ENCODE measurements at regions of chr4 and their contacts with region 1.

Region 1: DNA sequence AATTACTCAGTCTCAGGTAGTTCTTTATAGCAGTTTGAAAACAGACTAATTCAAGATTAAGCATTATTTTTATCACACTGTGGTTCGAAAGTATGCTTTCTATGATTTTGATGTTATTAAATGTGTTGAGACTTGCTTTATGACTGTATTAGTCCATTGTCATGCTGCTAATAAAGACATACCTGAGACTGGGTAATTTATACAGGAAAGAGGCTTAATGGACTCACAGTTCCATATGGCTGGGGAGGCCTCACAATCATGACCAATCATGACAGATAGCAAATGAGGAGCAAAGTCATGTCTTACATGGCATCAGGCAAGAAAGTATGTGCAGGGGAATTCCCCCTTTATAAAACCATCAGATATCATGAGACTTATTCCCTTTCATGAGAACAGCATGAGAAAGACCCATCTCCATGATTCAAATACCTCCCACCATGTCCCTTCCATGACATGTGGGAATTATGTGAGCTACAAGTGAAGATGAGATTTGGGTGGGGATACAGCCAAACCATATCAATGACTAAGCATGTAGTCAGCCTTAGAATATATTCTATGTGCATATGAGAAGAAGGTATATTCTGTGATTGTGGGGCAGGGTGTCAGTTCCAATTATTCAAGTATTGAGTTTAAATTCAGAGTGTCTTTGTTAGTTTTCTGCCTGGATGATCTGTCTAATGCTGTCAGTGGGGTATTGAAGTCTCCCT is 44.6 kb upstream of the UGT2A1 start:
- DNase-seq: no peak
- ATAC-seq: no peak
- H3K4me3 ChIP-seq: no peak overlapping the region
- H3K27ac ChIP-seq: no peak overlapping the region
- H3K4me1 ChIP-seq: no peaks in the 10 kb centered on the region
- H3K27me3 ChIP-seq: no peaks in the 10 kb centered on the region
- CTCF ChIP-seq: no peak
- POLR2A ChIP-seq: no peak

Region 2: GRCh38 chr4:70505151-70505748 is 807.6 kb after region 1 on chr4:
- intact Hi-C with region 1: loop called (anchors 10 kb)
- DNase-seq: peak; percentile 45 to 72 (median 61)
- ATAC-seq: peak; percentile 82
- H3K4me3 ChIP-seq: no peak overlapping the region
- H3K27ac ChIP-seq: no peak overlapping the region
- H3K4me1 ChIP-seq: no peaks in the 10 kb centered on the region
- H3K27me3 ChIP-seq: no peaks in the 10 kb centered on the region
- CTCF ChIP-seq: peak; percentile 55 to 83 (median 81)
- POLR2A ChIP-seq: no peak

Measured in body of pancreas (tissue), 4 donors.